ENCODE measurements at regions of chr7 and their contacts with region 1.

Region 1: DNA sequence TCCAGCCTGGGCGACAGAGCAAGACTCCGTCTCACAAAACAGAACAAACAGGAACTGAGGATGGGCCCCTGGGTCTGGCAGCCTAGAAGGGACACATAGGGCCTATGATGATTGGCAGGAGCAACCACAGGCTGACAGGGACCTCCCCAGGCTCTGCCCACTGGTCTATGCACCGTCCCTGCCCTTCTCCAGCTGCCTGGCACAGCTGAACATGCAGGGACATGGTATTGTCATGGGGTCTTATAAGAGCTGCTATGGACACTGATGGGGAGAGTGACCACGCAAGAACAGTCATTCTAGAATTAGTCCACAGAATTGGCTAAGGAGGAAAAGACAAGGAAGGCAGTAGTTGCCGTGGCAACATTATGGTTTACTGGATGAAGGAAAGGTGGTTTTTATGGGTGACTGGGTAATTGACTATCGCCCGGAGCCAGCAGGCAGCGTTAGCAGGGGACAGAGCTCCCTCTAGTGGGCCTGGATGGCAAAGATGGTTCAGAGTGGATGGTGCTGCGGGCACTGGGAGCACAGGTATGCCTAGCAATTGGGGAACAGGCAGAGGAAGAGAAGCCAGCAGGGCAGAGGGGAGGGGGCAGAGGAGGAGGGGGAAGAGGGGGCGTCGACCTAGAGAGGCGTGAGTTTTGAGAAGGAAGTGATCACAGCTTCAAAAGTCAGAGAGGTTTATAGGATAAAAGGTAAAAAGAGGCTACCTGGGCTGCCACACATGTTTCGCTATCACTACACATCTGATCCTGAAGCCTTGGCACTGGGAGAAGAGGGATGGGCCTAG is 7.8 kb upstream of the TRIM56 start:
- DNase-seq: peak; percentile 80
- H3K4me3 ChIP-seq: no peak overlapping the region
- H3K27ac ChIP-seq: no peak overlapping the region
- H3K4me1 ChIP-seq: no peaks in the 10 kb centered on the region
- H3K27me3 ChIP-seq: no peaks in the 10 kb centered on the region
- CTCF ChIP-seq: peak; percentile 96

Region 2: GRCh38 chr7:101332026-101332425 is 254.5 kb after region 1 on chr7:
- CTCF ChIA-PET with region 1: interaction called, 13 read pairs
- POLR2A ChIA-PET with region 1: no interaction called
- intact Hi-C with region 1: no loop called
- DNase-seq: no peak
- H3K4me3 ChIP-seq: no peak overlapping the region
- H3K27ac ChIP-seq: no peak overlapping the region
- H3K4me1 ChIP-seq: no peaks in the 10 kb centered on the region
- H3K27me3 ChIP-seq: no peaks in the 10 kb centered on the region
- CTCF ChIP-seq: no peak